ENCODE measurements at regions of chr12 and their contacts with region 1.

Region 1: DNA sequence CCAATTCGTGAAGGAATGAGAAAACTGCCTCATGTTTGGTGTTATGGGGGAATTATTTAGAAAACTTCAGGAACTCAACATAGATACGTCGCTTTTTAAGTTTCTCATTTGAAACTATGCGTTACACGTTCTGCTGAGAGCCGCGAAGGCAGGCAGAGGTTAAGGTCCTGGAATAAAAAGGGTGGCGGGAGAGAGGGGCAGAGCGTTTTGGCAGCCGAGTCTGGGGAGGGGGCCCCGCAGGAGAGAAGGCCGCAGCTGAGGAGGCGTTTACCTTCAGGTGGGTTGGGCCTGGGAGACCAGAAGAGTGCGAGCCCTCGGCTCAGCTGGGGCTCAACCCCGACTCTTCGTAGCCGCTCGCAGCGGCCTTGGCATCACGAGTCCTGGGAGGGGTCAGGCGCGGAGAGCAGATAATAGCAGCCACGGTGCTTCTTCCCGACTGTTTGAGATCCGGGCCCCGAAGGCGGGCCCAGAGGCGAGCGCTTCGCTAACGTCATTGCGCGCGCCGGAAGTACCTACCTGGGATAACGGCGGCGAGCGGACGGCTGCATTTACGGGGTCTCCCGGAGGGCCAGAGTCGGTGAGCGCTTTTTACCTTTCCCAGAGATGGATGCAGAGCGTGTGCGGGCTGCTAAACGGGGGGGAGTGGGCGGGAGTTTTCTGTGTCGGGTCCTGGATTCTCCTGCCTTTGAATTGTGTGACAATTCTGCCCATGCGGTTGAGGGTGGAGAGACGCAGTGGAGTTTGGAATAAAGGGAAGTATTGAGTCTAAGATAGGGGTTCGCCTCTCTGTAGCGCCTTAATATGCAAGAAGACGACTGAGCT is at the starts of genes PPHLN1 and ZCRB1:
- DNase-seq: peak; percentile 92
- total RNA-seq, gene PPHLN1: 33.7 TPM
- total RNA-seq, gene ZCRB1: 57.1 TPM

Region 2: DNA sequence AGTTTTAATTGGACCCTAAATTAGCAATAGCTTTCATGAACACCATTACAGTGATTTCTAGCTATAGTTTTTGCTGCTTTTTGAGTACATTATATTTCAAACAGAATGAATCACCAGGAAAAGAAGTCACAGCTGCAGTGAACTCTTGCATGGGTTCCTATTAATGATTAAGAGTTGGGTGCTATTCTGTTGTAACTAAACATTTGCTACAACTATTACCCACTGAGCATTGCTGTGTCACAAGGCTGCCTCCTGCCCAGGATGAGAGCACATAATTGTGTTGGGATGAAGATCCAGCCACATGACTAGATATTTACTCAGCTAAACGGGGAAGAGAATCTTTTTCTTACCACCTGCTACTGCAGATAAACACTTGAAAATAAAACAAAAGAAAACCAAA is 333.8 kb before region 1 on chr12:
- intact Hi-C with region 1: no loop called
- DNase-seq: no peak

Region 3: GRCh38 chr12:42237052-42237852 is 88.6 kb before region 1 on chr12:
- intact Hi-C with region 1: loop called (anchors 10 kb)
- DNase-seq: peak; percentile 88

Measured in cardiac septum (tissue), 1 donor.